ENCODE measurements at regions of chr6 and their contacts with region 1.

Region 1: GRCh38 chr6:7219310-7219709 is 93.7 kb downstream of the SSR1 start:
- DNase-seq: no peak
- H3K4me3 ChIP-seq: no peak overlapping the region
- H3K27ac ChIP-seq: peak overlapping the region; percentile 25
- H3K27me3 ChIP-seq: no peaks in the 10 kb centered on the region
- CTCF ChIP-seq: no peak

Region 2: GRCh38 chr6:6703711-6704451 is 515.4 kb before region 1 on chr6:
- CTCF ChIA-PET with region 1: no interaction called
- POLR2A ChIA-PET with region 1: interaction called, 13 read pairs
- DNase-seq: no peak
- H3K4me3 ChIP-seq: no peak overlapping the region
- H3K27ac ChIP-seq: no peak overlapping the region
- H3K27me3 ChIP-seq: peaks cover 7% of the 10 kb centered on the region
- CTCF ChIP-seq: no peak

Region 3: DNA sequence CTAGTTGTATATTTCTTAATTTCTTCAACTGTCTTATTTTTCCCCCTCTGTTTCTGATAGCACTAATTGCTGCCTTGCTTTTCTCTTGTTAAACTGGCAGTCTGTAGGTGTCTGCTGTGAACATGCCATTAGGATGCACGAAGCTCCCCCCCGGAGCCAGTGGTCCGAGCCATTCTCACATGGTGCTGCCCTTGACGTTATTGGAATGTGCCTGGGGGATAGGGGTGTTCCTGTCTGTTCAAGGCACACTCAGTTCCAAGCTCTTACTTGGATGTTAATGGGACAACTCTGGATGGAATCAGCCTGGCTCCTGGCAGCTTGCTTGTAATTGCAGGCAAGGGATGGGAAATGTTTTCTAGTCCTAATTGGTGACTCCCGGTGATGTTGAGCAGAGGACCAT is 43.1 kb before region 1 on chr6:
- CTCF ChIA-PET with region 1: no interaction called
- POLR2A ChIA-PET with region 1: no interaction called
- DNase-seq: no peak
- H3K4me3 ChIP-seq: no peak overlapping the region
- H3K27ac ChIP-seq: no peak overlapping the region
- H3K27me3 ChIP-seq: no peaks in the 10 kb centered on the region
- CTCF ChIP-seq: no peak

Region 4: GRCh38 chr6:7207720-7208119 is 11.6 kb before region 1 on chr6:
- CTCF ChIA-PET with region 1: interaction called, 15 read pairs
- POLR2A ChIA-PET with region 1: no interaction called
- DNase-seq: no peak
- H3K4me3 ChIP-seq: no peak overlapping the region
- H3K27ac ChIP-seq: no peak overlapping the region
- H3K27me3 ChIP-seq: no peaks in the 10 kb centered on the region
- CTCF ChIP-seq: no peak

Region 5: GRCh38 chr6:7249946-7250643 is 30.8 kb after region 1 on chr6:
- CTCF ChIA-PET with region 1: interaction called, 11 read pairs
- POLR2A ChIA-PET with region 1: no interaction called
- DNase-seq: no peak
- H3K4me3 ChIP-seq: no peak overlapping the region
- H3K27ac ChIP-seq: peak overlapping the region; percentile 21
- H3K27me3 ChIP-seq: no peaks in the 10 kb centered on the region
- CTCF ChIP-seq: no peak

Region 6: DNA sequence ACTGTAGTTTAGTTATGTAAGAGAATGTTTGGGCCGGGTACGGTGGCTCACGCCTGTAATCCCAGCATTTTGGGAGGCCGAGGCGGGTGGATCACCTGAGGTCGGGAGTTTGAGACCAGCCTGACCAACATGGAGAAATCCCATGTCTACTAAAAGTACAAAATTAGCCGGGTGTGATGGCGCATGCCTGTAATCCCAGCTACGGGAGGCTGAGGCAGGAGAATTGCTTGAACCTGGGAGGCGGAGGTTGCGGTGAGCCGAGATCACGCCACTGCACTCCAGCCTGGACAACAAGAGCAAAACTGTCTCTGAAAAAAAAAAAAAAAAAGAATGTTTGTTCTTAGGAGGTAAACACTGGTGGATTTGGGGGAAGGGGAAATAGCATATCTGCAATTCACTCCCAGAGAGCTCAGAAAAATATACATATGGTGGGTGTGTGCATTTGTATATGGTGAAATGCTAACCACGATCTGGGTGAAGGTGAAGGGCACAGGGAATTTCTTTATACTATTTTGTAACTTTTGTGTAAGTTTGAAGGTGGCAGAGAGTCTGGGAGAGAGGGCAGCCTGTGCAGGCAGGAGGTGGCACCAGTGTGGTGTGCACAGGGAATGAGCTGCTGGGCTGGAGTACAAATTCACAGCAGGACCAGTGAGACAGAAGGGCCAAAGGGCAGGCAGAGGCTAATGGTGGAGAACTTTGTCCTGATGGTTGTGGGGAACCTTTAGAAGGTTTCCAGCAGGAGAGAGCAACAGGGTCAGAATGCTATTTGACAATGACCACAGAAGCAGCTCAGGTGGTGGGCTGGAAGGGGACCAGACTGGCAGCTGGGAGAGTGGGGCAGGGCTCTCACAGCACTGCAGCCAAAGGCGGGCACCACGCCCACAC is 51.3 kb after region 1 on chr6:
- CTCF ChIA-PET with region 1: no interaction called
- POLR2A ChIA-PET with region 1: interaction called, 10 read pairs
- DNase-seq: no peak
- H3K4me3 ChIP-seq: no peak overlapping the region
- H3K27ac ChIP-seq: no peak overlapping the region
- H3K27me3 ChIP-seq: no peaks in the 10 kb centered on the region
- CTCF ChIP-seq: no peak

Measured in AG04450 (cell line).